ENCODE measurements at regions of chr11 and their contacts with region 1.

Region 1: GRCh38 chr11:8070417-8071115 is 10.4 kb upstream of the TUB start:
- DNase-seq: no peak
- H3K4me3 ChIP-seq: no peak overlapping the region
- CTCF ChIP-seq: peak; percentile 23

Region 2: GRCh38 chr11:7918127-7918526 is 152.4 kb before region 1 on chr11:
- CTCF ChIA-PET with region 1: no interaction called
- POLR2A ChIA-PET with region 1: no interaction called
- DNase-seq: no peak
- H3K4me3 ChIP-seq: no peak overlapping the region
- CTCF ChIP-seq: no peak

Region 3: DNA sequence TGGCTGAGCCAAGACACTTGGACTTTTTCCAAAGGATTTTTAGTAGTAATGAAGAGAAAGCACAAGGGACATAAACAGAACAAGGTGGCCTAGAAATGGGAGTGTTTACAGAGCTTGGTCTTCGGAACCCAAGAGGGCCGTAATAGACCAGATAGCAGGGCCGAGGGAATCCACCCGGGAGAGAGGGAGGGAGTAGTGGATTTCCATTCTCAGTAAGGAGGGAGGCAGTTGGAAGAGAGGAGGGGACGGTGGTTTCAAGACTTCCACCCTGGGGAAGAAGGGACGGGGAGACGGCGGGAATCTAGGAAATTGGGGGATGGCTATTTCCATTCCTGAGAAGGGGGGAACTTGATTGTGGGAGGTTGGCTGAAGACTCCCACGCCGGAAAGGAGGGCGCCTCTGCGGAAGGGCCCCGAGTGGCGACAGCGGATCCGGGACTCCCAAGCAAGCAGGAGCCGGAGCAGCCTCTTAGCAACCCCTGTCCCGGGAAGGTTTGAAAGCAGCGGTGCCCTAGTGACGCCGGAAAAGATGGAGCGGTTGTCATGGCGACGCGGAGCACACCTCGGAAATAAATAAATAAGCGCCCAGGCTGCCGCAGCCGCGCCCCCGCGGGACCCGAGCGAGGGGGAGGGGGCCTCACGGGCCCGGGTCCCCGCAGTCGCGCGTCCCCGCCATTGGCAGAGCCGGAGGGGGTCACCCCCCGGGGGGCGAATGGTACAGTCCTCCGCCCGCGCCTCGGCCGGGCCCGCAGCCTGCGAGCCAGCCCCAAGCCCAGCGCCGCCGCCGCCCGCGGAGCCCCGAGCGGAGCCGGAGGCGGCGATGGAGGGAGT is 51.9 kb before region 1 on chr11:
- CTCF ChIA-PET with region 1: interaction called, 12 read pairs
- POLR2A ChIA-PET with region 1: interaction called, 3 read pairs
- DNase-seq: no peak
- H3K4me3 ChIP-seq: peak overlapping the region; percentile 67
- CTCF ChIP-seq: no peak